Naive thymus-derived CD4-positive, alpha-beta T cell (primary cell): ENCODE measurements at regions of chr1 and their contacts with region 1.

Region 1: DNA sequence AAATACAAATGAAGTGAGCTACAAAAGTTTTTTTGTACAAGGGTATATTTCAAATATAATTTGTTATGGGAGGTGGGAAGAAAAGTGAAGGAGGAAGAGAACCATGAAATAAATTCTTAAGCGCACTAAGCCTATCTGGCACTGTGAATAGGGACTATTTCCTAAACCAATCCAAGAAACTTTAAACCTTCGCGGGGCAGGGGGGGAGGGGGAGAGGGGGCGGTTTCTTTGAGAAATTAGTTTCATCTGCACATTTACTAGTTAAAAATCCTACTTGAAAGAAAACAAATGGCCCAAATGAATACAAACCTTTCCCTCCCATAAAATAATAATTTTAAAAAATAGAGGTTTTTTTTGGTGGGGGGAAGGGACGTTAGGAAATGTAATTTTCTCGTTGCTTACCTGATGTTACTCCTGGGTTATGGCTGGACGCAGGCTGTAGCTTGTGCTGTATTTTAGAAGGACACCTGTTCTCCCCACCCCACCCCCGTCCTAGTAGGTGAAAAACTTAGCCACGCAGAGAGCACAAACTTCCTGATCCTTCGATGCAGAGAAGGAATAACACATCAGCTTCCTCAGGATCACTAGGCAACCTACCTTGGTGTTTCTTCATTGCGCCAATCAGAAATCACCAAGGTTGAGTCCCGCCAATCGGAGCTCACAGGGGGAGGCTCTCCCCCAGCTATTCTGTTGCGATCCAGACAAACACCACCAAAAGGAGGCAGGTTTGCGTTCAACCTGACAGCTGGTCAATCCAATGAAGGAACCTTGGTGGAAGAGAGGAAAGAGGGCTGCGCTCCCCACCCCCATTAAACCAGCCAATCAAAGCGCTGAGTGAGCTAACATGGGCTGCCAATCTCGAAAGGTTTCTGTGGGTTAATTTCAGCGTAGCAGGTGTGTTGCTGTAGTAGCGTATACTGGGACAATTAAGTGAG is at the start of gene GOLPH3L:
- DNase-seq: peak; percentile 46 to 95 (median 92)
- ATAC-seq: peak; percentile 100
- H3K4me3 ChIP-seq: peak within 1 kb of the TSS; percentile 73
- H3K4me3 Mint-ChIP-seq: peak within 1 kb of the TSS; percentile 91 to 100 (median 98)
- H3K27ac ChIP-seq: peak within 1 kb of the TSS; percentile 82
- H3K27ac Mint-ChIP-seq: peak within 1 kb of the TSS; percentile 81 to 99 (median 95)
- H3K4me1 ChIP-seq: peaks cover 4 to 11% of the 10 kb centered on the region in 2 donors
- H3K4me1 Mint-ChIP-seq: peaks cover 13 to 49% (median 42%) of the 10 kb centered on the region in 7 donors
- H3K27me3 ChIP-seq: no peaks in the 10 kb centered on the region
- H3K27me3 Mint-ChIP-seq: peaks cover 0 to 12% (median 0%) of the 10 kb centered on the region in 5 donors
- total RNA-seq, gene GOLPH3L: 8.7 to 32.1 (median 23.6) TPM

Region 2: DNA sequence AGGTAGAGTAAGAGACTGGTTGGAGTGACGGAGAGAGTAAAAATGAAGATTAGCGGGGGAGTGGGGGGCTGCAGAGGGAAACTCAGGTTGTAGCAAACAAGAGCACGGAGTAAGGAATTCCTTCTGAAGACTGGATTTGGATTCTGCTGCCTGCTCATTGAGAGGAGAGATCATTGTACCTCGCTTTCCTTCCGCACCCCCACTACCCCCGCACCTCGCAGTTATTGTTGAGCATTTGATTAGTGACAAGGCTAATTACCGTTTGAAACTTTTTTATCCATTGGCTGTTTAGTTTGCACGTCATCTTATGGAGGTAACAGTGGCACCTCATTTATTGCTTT is 375.1 kb before region 1 on chr1:
- CTCF ChIA-PET with region 1: no interaction called
- POLR2A ChIA-PET with region 1: no interaction called
- intact Hi-C with region 1: loop called in 1 of 2 experiments (anchors 1 kb)
- DNase-seq: peak in 5 of 9 donors; percentile 3 to 21 (median 14)
- ATAC-seq: peak; percentile 9
- H3K4me3 ChIP-seq: peak overlapping the region; percentile 97
- H3K4me3 Mint-ChIP-seq: peak overlapping the region; percentile 95 to 100 (median 99)
- H3K27ac ChIP-seq: peak overlapping the region; percentile 76
- H3K27ac Mint-ChIP-seq: peak overlapping the region; percentile 95 to 100 (median 99)
- H3K4me1 ChIP-seq: peaks cover 14 to 16% of the 10 kb centered on the region in 2 donors
- H3K4me1 Mint-ChIP-seq: peaks cover 10 to 54% (median 41%) of the 10 kb centered on the region in 7 donors
- H3K27me3 ChIP-seq: no peaks in the 10 kb centered on the region
- H3K27me3 Mint-ChIP-seq: peaks cover 0 to 2% (median 0%) of the 10 kb centered on the region in 5 donors

Region 3: DNA sequence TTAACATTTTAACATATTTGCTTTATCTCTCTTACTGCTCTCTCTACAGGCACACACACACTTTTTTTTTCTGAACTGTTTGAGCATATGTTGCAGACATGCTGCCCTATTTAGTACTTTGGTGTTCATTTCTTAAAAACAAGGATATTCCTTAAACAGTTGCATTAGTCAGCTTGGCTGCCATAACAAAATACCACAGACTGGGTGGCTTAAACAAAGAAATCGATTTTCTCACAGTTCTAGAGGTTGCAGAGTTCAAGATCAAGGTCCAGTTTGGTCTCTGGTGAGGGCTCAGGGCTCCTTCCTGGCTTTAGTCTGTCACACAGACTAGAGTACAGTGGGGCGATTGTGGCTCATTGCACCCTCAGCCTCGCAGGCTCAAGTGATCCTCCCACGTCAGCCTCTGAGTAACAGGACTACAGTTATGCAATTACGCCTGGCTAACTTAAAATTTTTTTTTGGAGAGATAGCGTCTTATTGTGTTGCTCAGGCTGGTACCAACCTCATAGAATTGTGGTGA is 286.2 kb before region 1 on chr1:
- CTCF ChIA-PET with region 1: no interaction called
- POLR2A ChIA-PET with region 1: no interaction called
- intact Hi-C with region 1: no loop called
- DNase-seq: no peak
- ATAC-seq: peak; percentile 27
- H3K4me3 ChIP-seq: no peak overlapping the region
- H3K4me3 Mint-ChIP-seq: no peak overlapping the region
- H3K27ac ChIP-seq: no peak overlapping the region
- H3K27ac Mint-ChIP-seq: peak overlapping the region in 2 of 9 donors; percentile 24 to 33
- H3K4me1 ChIP-seq: no peaks in the 10 kb centered on the region
- H3K4me1 Mint-ChIP-seq: peaks cover 10 to 80% (median 69%) of the 10 kb centered on the region in 7 donors
- H3K27me3 ChIP-seq: no peaks in the 10 kb centered on the region
- H3K27me3 Mint-ChIP-seq: no peaks in the 10 kb centered on the region

Region 4: DNA sequence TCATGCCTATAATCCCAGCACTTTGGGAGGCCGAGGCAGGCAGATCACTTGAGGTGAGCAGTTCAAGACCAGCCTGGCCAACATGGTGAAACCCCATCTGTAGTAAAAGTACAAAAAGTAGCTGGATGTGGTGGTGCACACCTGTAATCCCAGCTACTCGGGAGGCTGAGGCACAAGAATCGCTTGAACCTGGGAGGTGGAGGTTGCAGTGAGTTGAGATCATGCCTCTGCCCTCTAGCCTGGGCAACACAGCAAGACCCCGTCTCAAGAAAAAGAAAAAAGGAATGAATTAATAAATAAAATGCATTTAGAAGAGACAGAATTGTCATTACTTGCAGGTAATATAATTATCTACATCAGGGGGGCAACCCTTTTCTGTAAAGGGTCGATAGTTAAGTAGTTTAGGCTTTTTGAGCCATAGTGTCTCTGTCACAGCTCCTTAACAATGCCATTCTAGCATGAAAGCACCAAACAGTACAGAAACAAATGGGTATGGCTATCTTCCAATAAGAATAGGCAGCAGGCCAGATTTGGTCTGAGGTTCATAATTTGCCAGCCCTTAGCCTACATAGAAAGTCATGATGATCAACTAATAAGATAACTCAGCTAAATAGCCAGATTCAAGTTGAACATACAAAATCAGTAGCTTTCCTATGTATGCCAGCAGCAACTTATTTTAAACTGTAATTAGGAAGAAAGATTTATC is 276.1 kb before region 1 on chr1:
- CTCF ChIA-PET with region 1: no interaction called
- POLR2A ChIA-PET with region 1: no interaction called
- intact Hi-C with region 1: no loop called
- DNase-seq: no peak
- ATAC-seq: no peak
- H3K4me3 ChIP-seq: no peak overlapping the region
- H3K4me3 Mint-ChIP-seq: no peak overlapping the region
- H3K27ac ChIP-seq: no peak overlapping the region
- H3K27ac Mint-ChIP-seq: peak overlapping the region in 1 of 9 donors; percentile 54
- H3K4me1 ChIP-seq: no peaks in the 10 kb centered on the region
- H3K4me1 Mint-ChIP-seq: peaks cover 4 to 27% (median 17%) of the 10 kb centered on the region in 7 donors
- H3K27me3 ChIP-seq: no peaks in the 10 kb centered on the region
- H3K27me3 Mint-ChIP-seq: no peaks in the 10 kb centered on the region

Region 5: DNA sequence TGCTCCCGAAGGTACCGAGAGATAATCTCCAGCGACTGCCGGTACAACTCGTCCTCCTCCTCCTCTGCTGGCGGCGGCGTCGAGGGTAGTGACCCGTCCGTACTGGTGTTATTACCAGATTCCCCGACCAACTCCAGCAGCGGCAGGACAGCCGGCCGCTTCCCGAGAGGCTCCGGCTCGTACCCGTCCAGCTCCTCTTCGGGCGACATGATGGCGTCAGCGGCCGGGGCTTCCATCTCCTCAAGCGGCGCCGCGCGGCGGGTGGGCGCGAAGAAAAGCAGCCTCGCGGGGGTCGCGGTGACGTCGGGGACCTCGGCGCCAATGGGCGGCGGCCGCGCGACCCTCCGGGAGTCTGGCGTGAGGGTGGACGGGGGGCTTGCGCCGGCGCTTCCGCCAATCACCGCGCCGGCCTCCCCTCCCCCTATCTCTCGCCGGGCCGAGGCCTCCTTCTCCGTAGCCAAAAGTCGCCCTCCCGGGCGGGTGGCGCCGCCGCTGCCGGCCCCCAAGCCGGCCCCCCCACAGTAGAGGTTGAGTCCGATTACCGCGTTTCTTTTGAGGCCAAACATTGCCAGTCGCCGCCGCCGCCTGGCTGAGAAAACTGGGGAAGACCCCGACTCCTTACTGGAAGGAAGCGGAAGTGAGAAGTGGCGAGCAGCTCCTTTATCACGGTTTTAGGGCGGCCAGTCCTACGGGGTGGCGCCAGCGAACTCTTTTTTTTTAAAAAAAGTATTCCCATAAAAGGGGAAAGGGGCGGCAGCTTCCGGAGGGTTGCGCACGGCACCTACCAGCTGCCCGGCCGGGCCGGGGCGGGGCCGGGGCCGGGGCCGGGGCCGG is 117.7 kb before region 1 on chr1 and contains the start of gene MCL1:
- CTCF ChIA-PET with region 1: no interaction called
- POLR2A ChIA-PET with region 1: interaction called, 10 read pairs
- intact Hi-C with region 1: no loop called
- DNase-seq: peak; percentile 75 to 88 (median 83)
- ATAC-seq: peak; percentile 90
- H3K4me3 ChIP-seq: peak within 1 kb of the TSS; percentile 95
- H3K4me3 Mint-ChIP-seq: peak within 1 kb of the TSS; percentile 92 to 99 (median 95)
- H3K27ac ChIP-seq: peak within 1 kb of the TSS; percentile 97
- H3K27ac Mint-ChIP-seq: peak within 1 kb of the TSS; percentile 96 to 99 (median 98)
- H3K4me1 ChIP-seq: peaks cover 3 to 15% of the 10 kb centered on the region in 2 donors
- H3K4me1 Mint-ChIP-seq: peaks cover 25 to 39% (median 29%) of the 10 kb centered on the region in 7 donors
- H3K27me3 ChIP-seq: no peaks in the 10 kb centered on the region
- H3K27me3 Mint-ChIP-seq: peaks cover 0 to 7% (median 0%) of the 10 kb centered on the region in 5 donors
- total RNA-seq, gene MCL1: 302 to 1,400 (median 377) TPM

Region 6: GRCh38 chr1:150841626-150842025 is 144.8 kb after region 1 on chr1:
- CTCF ChIA-PET with region 1: no interaction called
- POLR2A ChIA-PET with region 1: no interaction called
- intact Hi-C with region 1: loop called in 1 of 2 experiments (anchors 10 kb)
- DNase-seq: peak in 7 of 9 donors; percentile 54 to 82 (median 70)
- ATAC-seq: peak; percentile 93
- H3K4me3 ChIP-seq: no peak overlapping the region
- H3K4me3 Mint-ChIP-seq: peak overlapping the region in 9 of 10 donors; percentile 10 to 66 (median 49)
- H3K27ac ChIP-seq: peak overlapping the region; percentile 63
- H3K27ac Mint-ChIP-seq: peak overlapping the region; percentile 49 to 94 (median 86)
- H3K4me1 ChIP-seq: peaks cover 0 to 29% of the 10 kb centered on the region in 2 donors
- H3K4me1 Mint-ChIP-seq: peaks cover 27 to 57% (median 49%) of the 10 kb centered on the region in 7 donors
- H3K27me3 ChIP-seq: no peaks in the 10 kb centered on the region
- H3K27me3 Mint-ChIP-seq: no peaks in the 10 kb centered on the region

Region 7: GRCh38 chr1:150925816-150926741 is 229.2 kb after region 1 on chr1 and contains the start of gene SETDB1:
- CTCF ChIA-PET with region 1: interaction called, 4 read pairs
- POLR2A ChIA-PET with region 1: no interaction called
- intact Hi-C with region 1: loop called (anchors 1 to 5 kb)
- DNase-seq: peak; percentile 69 to 93 (median 90)
- ATAC-seq: peak; percentile 98
- H3K4me3 ChIP-seq: peak within 1 kb of the TSS; percentile 92
- H3K4me3 Mint-ChIP-seq: peak within 1 kb of the TSS; percentile 92 to 97 (median 94)
- H3K27ac ChIP-seq: peak within 1 kb of the TSS; percentile 91
- H3K27ac Mint-ChIP-seq: peak within 1 kb of the TSS; percentile 92 to 99 (median 95)
- H3K4me1 ChIP-seq: peaks cover 0 to 7% of the 10 kb centered on the region in 2 donors
- H3K4me1 Mint-ChIP-seq: peaks cover 15 to 35% (median 27%) of the 10 kb centered on the region in 7 donors
- H3K27me3 ChIP-seq: no peaks in the 10 kb centered on the region
- H3K27me3 Mint-ChIP-seq: no peaks in the 10 kb centered on the region
- total RNA-seq, gene SETDB1: 57.3 to 94.9 (median 61.7) TPM

Region 8: DNA sequence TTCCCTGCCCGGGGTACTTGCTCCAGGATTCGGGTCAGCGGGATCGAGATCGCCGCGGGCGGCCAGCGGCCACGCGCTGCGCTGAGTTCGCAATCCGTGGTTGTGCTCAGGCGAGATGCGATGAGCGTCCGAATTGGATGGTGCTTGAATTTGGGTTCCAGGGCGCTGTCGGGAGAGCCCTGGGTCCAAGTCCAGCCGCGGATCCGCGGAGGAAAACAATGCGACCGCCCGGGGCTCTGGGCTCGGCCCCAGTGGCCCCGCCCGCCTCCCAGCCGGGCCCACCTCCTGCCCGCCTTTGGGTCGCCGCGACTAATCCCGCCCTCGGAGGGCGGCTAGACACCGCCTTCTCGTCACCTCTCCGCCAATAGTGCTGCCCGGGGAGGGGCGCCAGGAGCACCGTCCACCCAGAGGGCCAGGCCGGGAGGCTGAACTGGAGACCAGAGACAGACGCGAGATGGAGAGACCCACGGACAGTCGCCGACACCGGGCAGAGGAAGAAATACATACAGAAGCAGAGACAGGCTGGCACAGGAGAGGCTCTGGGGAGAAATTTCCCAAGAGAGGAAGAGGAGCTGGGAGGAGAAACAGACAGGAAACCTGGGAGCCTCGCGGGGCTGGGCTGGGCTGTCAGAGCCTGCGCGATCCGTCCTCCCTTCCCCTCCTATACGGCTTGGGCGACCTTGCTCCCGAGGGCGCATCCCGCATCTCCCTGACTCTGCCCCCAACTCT is 449.7 kb after region 1 on chr1 and contains the start of gene SEMA6C:
- CTCF ChIA-PET with region 1: no interaction called
- POLR2A ChIA-PET with region 1: no interaction called
- intact Hi-C with region 1: no loop called
- DNase-seq: peak; percentile 70 to 92 (median 78)
- ATAC-seq: peak; percentile 100
- H3K4me3 ChIP-seq: peak within 1 kb of the TSS; percentile 66
- H3K4me3 Mint-ChIP-seq: peak within 1 kb of the TSS; percentile 91 to 99 (median 98)
- H3K27ac ChIP-seq: peak within 1 kb of the TSS; percentile 67
- H3K27ac Mint-ChIP-seq: peak within 1 kb of the TSS; percentile 66 to 94 (median 87)
- H3K4me1 ChIP-seq: no peaks in the 10 kb centered on the region
- H3K4me1 Mint-ChIP-seq: peaks cover 12 to 24% (median 22%) of the 10 kb centered on the region in 7 donors
- H3K27me3 ChIP-seq: no peaks in the 10 kb centered on the region
- H3K27me3 Mint-ChIP-seq: peaks cover 0 to 23% (median 0%) of the 10 kb centered on the region in 5 donors
- total RNA-seq, gene SEMA6C: 2.5 to 12.4 (median 4.7) TPM